Activated CD4-positive, alpha-beta T cell treated with anti-CD3 and anti-CD28 coated beads for 36 hours (primary cell): ENCODE measurements at regions of chr1 and their contacts with region 1.

Region 1: DNA sequence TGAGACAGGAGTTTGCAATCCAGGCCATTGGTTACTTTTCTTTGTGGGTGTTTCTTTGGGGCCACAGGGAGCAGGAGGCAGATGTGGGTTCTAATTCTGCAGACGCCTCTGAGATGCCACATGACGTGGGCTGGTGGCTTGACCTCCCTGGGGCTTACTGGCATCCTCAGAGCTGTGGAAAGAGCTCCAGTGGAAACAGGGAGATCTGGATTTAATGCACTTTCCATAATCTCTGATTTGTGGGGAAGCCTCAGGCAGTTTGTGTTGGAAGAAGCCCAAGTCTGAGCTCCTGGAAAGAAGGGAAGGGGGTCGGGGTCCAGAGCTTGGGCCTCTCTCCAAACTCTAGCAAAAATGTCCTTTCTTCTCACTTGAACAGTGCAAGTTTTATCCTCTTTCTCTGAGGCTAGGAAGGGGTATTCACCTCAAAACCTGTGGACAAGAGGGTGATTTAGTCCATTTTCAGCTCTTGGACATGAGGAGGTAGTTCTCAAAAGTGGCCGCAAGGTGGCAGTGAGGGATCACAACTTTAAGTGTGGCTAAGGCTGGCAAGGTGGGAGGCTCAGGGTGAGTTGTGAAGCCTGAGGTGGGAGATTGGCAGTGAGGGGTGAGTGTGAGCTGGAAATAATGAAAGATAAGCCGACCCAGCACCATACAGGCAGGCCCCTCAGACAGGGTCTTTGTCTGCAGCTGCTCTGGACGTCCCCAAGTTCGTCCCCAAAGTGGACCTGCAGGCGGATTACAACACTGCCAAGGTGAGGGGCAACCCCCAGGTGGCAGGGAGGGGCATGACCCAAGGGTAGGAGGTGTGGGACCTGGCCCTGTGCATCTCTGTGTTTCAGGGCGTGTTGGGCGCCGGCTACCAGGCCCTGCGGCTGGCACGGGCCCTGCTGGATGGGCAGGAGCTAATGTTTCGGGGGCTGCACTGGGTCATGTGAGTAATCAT is 9.2 kb downstream of the IKBKE start:
- DNase-seq: peak; percentile 85
- ATAC-seq: peak; percentile 56
- H3K4me3 Mint-ChIP-seq: no peak overlapping the region
- H3K27ac Mint-ChIP-seq: peak overlapping the region; percentile 66
- H3K4me1 Mint-ChIP-seq: peaks cover 28% of the 10 kb centered on the region
- H3K27me3 Mint-ChIP-seq: no peaks in the 10 kb centered on the region

Region 2: DNA sequence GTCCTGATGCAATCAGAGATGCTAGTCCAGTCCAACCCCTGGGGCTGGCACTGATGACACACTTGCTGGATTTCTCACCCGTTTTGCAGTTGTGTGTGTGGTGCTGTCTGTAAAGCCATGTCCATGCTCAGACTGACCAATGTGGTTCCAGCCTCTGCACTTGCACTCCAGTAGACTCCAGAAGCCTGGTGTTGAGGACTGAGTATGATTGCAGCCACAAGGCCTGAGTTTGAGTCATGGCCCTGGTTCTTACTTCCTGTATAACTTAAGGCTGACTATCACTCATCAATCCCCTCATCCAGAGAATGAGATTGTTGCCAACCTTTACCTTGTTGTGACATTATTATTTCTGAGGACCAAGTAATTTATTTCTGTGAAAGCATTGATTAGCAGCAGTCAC is 44.0 kb before region 1 on chr1:
- CTCF ChIA-PET with region 1: no interaction called
- POLR2A ChIA-PET with region 1: no interaction called
- intact Hi-C with region 1: no loop called
- DNase-seq: peak; percentile 8
- ATAC-seq: peak; percentile 75
- H3K4me3 Mint-ChIP-seq: no peak overlapping the region
- H3K27ac Mint-ChIP-seq: no peak overlapping the region
- H3K4me1 Mint-ChIP-seq: no peaks in the 10 kb centered on the region
- H3K27me3 Mint-ChIP-seq: no peaks in the 10 kb centered on the region

Region 3: DNA sequence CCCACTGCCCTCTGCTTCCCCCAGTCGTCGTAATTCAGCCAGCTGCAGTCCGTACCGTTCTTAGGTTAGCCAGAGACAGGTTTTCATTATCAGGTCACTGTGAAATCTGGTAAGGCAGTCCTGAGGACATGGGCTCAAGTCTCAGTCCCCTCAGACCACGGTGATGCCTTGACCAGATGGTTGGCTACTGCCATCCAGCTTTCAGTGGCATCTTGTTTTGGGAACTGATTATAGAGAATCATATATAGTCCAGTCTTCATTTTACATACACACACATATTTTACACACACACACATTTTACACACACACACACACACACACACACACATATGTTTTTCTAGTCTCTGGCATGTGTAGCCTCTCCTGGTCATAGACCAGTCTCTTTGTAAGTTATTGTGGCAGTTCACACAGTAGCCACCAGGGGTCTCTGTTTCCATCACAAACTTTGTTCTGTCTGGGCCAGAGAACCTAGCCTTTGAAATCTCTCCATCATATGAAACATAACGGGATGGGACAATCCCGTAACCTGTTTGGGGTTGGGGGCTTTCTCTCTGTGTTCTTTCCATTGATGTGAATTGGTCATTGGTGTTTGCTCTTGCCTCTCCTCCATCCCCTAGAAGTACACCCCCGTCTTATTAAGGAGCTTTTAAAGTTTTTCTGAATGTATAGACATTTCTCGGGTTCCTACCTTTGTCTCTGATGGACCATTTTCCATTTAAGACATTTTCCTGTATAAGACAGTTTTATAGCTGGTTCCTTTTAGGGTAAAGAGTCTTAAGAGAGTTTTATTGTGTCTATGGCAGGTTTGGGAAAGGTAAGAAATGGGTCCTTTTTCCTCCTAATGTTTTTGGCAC is 17.6 kb before region 1 on chr1:
- CTCF ChIA-PET with region 1: interaction called, 55 read pairs
- POLR2A ChIA-PET with region 1: no interaction called
- intact Hi-C with region 1: loop called in 1 of 2 experiments (anchors 1 kb)
- DNase-seq: peak; percentile 85
- ATAC-seq: peak; percentile 57
- H3K4me3 Mint-ChIP-seq: no peak overlapping the region
- H3K27ac Mint-ChIP-seq: peak overlapping the region; percentile 39
- H3K4me1 Mint-ChIP-seq: peaks cover 49% of the 10 kb centered on the region
- H3K27me3 Mint-ChIP-seq: no peaks in the 10 kb centered on the region

Region 4: GRCh38 chr1:206489980-206490770 is 10.7 kb after region 1 on chr1:
- CTCF ChIA-PET with region 1: interaction called, 16 read pairs
- POLR2A ChIA-PET with region 1: no interaction called
- intact Hi-C with region 1: no loop called
- DNase-seq: peak; percentile 89
- ATAC-seq: peak; percentile 95
- H3K4me3 Mint-ChIP-seq: no peak overlapping the region
- H3K27ac Mint-ChIP-seq: no peak overlapping the region
- H3K4me1 Mint-ChIP-seq: no peaks in the 10 kb centered on the region
- H3K27me3 Mint-ChIP-seq: no peaks in the 10 kb centered on the region

Region 5: DNA sequence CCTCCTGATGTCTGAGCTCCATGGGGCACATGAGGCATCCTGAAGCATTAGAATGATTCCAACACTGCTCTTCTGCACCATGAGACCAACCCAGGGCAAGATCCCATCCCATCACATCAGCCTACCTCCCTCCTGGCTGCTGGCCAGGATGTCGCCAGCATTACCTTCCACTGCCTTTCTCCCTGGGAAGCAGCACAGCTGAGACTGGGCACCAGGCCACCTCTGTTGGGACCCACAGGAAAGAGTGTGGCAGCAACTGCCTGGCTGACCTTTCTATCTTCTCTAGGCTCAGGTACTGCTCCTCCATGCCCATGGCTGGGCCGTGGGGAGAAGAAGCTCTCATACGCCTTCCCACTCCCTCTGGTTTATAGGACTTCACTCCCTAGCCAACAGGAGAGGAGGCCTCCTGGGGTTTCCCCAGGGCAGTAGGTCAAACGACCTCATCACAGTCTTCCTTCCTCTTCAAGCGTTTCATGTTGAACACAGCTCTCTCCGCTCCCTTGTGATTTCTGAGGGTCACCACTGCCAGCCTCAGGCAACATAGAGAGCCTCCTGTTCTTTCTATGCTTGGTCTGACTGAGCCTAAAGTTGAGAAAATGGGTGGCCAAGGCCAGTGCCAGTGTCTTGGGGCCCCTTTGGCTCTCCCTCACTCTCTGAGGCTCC is 16.8 kb after region 1 on chr1:
- CTCF ChIA-PET with region 1: interaction called, 11 read pairs
- POLR2A ChIA-PET with region 1: interaction called, 3 read pairs
- intact Hi-C with region 1: no loop called
- DNase-seq: no peak
- ATAC-seq: no peak
- H3K4me3 Mint-ChIP-seq: no peak overlapping the region
- H3K27ac Mint-ChIP-seq: peak overlapping the region; percentile 49
- H3K4me1 Mint-ChIP-seq: peaks cover 5% of the 10 kb centered on the region
- H3K27me3 Mint-ChIP-seq: no peaks in the 10 kb centered on the region

Region 6: GRCh38 chr1:206606856-206607255 is 127.4 kb after region 1 on chr1:
- CTCF ChIA-PET with region 1: interaction called, 10 read pairs
- POLR2A ChIA-PET with region 1: no interaction called
- intact Hi-C with region 1: no loop called
- DNase-seq: no peak
- ATAC-seq: no peak
- H3K4me3 Mint-ChIP-seq: no peak overlapping the region
- H3K27ac Mint-ChIP-seq: peak overlapping the region; percentile 64
- H3K4me1 Mint-ChIP-seq: peaks cover 45% of the 10 kb centered on the region
- H3K27me3 Mint-ChIP-seq: no peaks in the 10 kb centered on the region